ENCODE measurements at regions of chr15 and their contacts with region 1.

Region 1: GRCh38 chr15:79643393-79643792 is 211.3 kb downstream of the MINAR1 start:
- DNase-seq: no peak
- ATAC-seq: no peak
- H3K4me3 ChIP-seq: no peak overlapping the region
- H3K4me3 Mint-ChIP-seq: no peak overlapping the region
- H3K27ac ChIP-seq: no peak overlapping the region
- H3K27ac Mint-ChIP-seq: no peak overlapping the region
- H3K4me1 ChIP-seq: no peaks in the 10 kb centered on the region
- H3K4me1 Mint-ChIP-seq: no peaks in the 10 kb centered on the region
- H3K27me3 ChIP-seq: peaks cover 0 to 3% of the 10 kb centered on the region in 2 experiments
- H3K27me3 Mint-ChIP-seq: peaks cover 23 to 25% of the 10 kb centered on the region in 2 donors

Region 2: GRCh38 chr15:79689030-79689429 is 45.6 kb after region 1 on chr15:
- CTCF ChIA-PET with region 1: no interaction called
- POLR2A ChIA-PET with region 1: interaction called in 1 of 2 experiments, 10 read pairs
- DNase-seq: no peak
- ATAC-seq: no peak
- H3K4me3 ChIP-seq: no peak overlapping the region
- H3K4me3 Mint-ChIP-seq: no peak overlapping the region
- H3K27ac ChIP-seq: no peak overlapping the region
- H3K27ac Mint-ChIP-seq: no peak overlapping the region
- H3K4me1 ChIP-seq: no peaks in the 10 kb centered on the region
- H3K4me1 Mint-ChIP-seq: no peaks in the 10 kb centered on the region
- H3K27me3 ChIP-seq: peaks cover 0 to 3% of the 10 kb centered on the region in 2 experiments
- H3K27me3 Mint-ChIP-seq: peaks cover 10 to 11% of the 10 kb centered on the region in 2 donors

Measured in T-cell (primary cell).